GM13977 (cell line): ENCODE measurements at regions of chr2 and their contacts with region 1.

Region 1: DNA sequence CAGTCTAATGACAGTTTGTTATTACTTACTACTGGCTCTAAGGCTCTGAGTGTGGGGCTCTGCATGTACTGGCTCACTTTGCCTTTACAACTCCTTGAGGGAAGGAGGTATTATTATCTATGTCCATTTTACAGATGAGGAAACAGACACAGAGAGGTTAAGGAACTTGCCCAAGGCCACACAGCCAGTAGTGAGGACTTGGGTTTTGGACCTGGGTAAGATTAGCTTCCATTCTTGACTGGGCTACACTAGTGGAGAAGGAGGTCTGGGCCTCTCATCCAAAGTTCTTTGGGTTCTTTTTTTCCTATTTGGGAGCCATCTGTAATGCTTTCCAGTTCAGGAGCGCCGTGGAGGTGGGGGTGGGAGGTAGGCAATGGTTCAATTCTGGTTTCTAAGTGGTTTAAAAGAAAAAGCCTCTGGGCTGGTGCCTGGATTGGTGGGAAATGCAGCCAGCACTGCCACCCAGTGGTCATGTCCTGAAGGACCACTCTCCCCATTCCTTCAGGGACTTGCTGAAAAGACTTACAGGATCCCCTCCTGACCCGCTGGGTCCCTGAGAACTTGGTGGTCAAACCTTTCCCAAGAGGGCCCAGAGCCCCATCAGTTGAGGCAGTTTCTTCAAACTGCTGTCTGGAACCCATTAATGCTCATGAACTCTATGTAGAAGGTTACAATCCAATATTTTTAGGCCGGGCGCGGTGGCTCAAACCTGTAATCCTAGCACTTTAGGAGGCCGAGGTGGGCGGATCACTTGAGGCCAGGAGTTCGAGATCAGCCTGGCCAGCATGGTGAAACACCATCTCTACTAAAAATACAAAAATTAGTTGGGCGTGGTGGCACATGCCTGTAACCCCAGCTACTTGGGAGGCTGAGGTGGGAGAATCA is 38.6 kb upstream of the NOTO start:
- DNase-seq: peak; percentile 83
- CTCF ChIP-seq: peak; percentile 86

Region 2: GRCh38 chr2:72993147-72993932 is 170.4 kb before region 1 on chr2:
- in situ Hi-C with region 1: loop called (anchors 25 kb)
- DNase-seq: peak; percentile 83
- CTCF ChIP-seq: peak; percentile 70